Cardiac septum (tissue), 1 donor: ENCODE measurements at regions of chr1 and their contacts with region 1.

Region 1: GRCh38 chr1:31394628-31395193 is 18.3 kb upstream of the SERINC2 start:
- DNase-seq: peak; percentile 93

Region 2: DNA sequence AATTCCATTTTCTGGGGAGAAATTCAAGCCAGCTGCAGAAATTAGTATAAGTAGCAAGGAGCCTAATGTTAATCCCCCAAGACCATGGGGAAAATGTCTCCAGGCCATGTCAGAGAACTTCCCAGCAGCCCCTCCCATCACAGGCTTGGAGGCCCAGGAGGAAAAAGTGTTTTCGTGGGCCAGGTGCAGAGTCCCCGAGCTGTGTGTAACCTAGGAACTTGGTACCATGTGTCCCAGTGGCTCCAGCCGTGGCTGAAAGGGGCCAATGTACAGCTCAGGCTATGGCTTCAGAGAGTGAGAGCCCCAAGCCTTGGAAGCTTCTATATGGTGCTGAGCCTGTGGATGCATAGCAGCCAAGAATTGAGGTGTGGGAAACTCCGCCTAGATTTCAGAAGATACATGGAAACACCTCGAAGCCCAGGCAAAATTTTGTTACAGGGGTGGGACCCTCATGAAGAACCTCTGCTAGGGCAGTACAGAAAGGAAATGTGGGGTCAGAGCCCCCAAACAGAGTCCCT is 957.6 kb before region 1 on chr1:
- intact Hi-C with region 1: no loop called
- DNase-seq: no peak

Region 3: DNA sequence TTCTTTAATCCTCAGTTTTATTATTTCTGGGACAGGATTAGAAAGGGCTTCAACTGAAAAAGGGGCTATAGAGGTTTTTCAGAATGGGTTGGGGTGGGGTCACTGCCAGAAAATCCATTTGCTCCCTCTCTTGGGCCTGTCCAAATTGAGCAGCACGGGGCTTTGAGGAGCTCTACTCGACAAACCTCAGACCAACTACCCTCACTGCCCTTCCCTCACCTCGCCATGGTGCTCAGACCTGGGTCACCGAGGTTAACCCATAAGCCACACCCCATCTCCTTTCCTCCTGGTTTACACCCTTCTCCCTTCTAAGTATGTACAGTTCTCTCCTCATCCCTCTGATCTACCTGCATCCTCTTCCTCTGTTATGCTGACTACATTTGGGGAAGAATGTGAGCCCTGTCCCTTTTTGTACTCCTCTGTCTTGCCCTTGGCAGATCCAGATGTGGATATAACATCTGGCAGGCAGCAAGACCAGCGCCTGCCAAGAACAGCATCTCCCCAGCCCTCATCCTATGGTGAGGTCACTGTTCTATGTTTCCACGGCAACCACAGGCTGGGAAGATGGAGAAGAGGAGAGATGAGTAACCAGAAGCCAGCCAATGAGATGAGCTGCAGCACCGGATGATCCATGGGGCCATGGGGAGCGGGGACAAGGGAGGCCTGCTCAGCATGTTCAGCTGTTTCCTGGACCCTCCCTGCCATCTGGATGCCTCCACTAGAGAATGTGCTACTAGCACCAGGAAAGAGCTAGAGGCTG is 18.2 kb before region 1 on chr1:
- intact Hi-C with region 1: no loop called
- DNase-seq: peak; percentile 62

Region 4: DNA sequence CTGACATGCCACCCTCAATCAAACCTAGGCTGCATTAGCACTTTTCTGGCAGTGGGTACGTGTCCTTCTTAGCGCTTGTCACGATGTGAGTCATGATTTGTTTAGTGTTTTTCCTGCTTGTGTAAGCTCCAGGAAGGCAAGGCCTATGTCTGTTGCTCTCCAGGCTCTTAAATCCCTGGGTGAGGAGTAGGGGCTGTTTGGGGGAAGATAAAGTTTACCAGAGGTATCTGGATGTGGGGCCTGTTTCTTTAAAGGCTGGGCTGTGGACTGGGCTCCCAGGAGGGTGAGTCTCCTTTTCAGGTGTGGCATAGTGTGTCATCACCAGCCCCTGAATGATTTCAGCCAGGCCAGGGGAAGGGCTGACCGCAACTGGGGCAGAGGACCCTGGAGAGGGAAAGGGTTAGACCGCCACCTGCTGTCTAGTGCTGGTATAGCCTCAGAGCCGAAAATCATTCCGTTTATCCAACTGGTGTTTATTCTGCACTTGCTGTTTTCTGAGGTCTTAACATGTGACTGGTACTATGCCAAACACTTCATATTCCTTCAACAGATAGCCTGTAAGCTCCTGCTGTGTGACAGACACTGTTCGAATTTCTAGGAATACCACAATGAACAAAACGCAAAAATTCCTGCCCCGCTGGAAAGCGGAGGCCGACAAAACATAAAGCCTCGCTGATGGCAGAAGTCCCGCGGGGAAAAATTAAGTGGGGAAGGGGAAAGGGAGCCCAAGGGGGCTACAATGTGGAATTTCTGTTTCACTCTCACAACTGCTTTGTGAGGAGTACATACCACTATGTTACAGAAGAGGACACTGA is 28.0 kb after region 1 on chr1:
- intact Hi-C with region 1: loop called (anchors 2 kb)
- DNase-seq: no peak

Region 5: GRCh38 chr1:31460027-31460426 is 65.3 kb after region 1 on chr1:
- intact Hi-C with region 1: no loop called
- DNase-seq: no peak

Region 6: GRCh38 chr1:31548907-31549808 is 154.4 kb after region 1 on chr1:
- intact Hi-C with region 1: loop called (anchors 2 kb)
- DNase-seq: peak; percentile 92